Activated naive CD4-positive, alpha-beta T cell treated with anti-CD3 and anti-CD28 coated beads, Interleukin-2, amount 10 ng/mL, durations not matched to agents 7 days and 5 days (primary cell): ENCODE measurements at regions of chr19 and their contacts with region 1.

Region 1: GRCh38 chr19:43765109-43765876 is 10.5 kb upstream of the SMG9 start:
- DNase-seq: peak; percentile 82
- H3K4me3 Mint-ChIP-seq: peak overlapping the region; percentile 37
- H3K27ac Mint-ChIP-seq: peak overlapping the region; percentile 91
- H3K4me1 Mint-ChIP-seq: peaks cover 52% of the 10 kb centered on the region
- H3K27me3 Mint-ChIP-seq: no peaks in the 10 kb centered on the region

Region 2: GRCh38 chr19:43668406-43669158 is 96.7 kb before region 1 on chr19:
- CTCF ChIA-PET with region 1: interaction called, 16 read pairs
- DNase-seq: peak; percentile 99
- H3K4me3 Mint-ChIP-seq: peak overlapping the region; percentile 79
- H3K27ac Mint-ChIP-seq: peak overlapping the region; percentile 71
- H3K4me1 Mint-ChIP-seq: peaks cover 56% of the 10 kb centered on the region
- H3K27me3 Mint-ChIP-seq: peaks cover 37% of the 10 kb centered on the region

Region 3: DNA sequence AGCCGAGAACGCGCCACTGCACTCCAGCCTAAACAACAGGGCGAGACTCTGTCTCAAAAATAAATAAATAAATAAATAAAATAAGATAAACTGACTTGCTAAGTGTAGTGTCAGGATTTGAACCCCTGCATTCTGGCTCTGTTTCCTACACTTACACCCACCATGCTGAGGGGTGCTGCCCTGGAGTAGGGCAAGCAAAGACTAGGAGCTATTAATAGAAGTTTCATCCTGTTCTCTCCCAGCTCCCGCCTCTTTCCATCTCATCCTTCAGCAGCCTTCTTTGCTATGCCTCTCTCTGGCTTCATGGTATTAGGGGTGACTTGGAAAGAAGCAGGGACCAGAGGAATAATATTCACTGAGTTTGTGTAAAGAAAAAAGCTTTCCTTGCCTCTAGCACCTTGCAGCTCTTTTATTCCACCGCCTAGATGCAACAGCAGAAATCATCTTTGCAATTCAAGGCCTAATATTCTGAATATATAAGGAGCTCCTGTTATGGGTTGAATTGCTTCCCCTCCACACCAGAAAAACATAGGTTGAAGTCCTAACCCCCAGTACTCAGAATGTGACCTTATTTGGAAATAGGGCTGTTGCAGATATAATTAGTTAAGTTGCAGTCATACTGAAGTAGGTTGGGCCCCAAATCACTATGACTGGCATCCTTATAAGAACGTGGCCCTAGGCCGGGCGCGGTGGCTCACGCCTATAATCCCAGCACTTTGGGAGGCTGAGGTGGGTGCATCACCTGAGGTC is 86.6 kb before region 1 on chr19:
- CTCF ChIA-PET with region 1: no interaction called
- DNase-seq: no peak
- H3K4me3 Mint-ChIP-seq: no peak overlapping the region
- H3K27ac Mint-ChIP-seq: no peak overlapping the region
- H3K4me1 Mint-ChIP-seq: peaks cover 18% of the 10 kb centered on the region
- H3K27me3 Mint-ChIP-seq: peaks cover 8% of the 10 kb centered on the region

Region 4: DNA sequence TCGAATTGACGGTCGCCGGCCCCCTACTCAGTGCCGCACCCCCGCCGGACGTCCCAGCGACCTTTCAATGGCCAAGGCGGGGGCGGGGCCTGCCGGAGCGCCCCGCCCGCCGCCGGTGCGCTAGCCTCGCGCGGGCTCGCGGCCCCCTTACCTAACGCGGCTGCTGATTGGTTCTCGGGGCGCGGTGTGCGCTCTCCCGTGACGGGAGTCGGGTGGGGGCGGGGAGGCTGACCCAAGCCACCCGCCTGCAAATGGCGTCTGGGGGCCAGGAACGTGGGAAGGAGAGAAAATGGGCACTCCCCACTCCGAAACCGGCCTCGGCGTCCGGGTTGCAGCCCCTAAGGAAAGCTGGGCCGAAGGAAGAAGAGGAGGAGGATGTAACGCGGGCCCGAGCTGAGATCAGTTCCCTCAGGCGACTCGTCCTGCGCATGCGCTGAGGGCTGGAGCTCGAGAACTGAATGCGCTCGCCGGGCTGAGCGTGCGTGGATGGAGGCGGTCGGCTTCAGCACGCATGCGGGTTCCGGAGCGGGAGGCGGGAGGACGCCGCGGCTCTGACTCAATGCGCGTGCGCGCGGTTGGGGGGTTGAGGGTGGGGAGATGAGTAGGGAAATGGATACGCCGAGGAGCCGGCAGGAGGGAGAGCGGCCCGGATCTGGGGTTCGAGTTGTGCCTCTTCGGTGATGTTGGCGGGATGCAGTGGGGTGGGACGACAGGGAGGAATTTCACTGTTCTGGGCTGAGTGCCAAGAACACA is 10.6 kb before region 1 on chr19 and contains the start of gene SMG9:
- CTCF ChIA-PET with region 1: interaction called, 68 read pairs
- DNase-seq: peak; percentile 99
- H3K4me3 Mint-ChIP-seq: peak within 1 kb of the TSS; percentile 92
- H3K27ac Mint-ChIP-seq: peak within 1 kb of the TSS; percentile 99
- H3K4me1 Mint-ChIP-seq: peaks cover 63% of the 10 kb centered on the region
- H3K27me3 Mint-ChIP-seq: peaks cover 3% of the 10 kb centered on the region

Region 5: DNA sequence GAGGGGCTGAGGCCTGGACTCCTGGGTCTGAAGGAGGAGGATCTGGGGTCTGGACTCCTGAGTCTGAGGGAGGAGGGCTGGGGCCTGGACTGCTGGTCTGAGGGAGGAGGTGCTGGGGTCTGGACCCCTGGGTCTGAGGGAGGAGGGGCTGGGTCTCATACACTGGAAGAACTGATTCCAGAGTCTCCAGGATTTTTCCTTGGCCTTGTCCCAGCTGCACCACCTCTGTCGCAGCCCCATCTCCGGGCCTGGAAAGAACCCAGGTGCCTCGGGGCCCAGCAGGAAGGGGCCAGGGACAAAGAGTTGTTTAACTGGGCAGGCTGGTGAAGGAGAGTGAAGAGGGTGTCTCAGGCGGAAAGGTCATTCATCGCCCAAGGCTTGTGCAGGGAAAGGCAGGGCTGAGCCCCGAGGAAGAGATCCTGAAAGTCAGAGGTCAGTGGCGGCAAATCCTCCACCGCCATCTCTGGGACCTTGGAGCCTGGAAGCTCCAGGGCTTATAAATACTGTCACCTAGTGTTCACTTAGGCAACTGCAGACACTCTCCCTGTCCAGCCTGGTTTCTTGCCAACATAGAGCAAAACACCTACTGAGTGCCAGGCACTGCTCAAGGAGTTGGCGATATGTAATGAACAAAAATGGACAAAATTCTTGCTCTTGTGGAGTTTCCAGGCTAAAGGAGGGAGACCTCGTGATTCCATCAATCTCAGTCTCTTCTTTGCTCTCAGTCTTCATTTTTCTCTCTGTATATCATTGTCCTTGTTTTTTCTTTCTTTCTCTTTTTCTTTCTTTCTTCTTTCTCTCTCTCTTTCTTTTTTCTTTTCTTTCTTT is 19.9 kb after region 1 on chr19:
- CTCF ChIA-PET with region 1: interaction called, 162 read pairs
- DNase-seq: peak; percentile 65
- H3K4me3 Mint-ChIP-seq: peak overlapping the region; percentile 2
- H3K27ac Mint-ChIP-seq: peak overlapping the region; percentile 89
- H3K4me1 Mint-ChIP-seq: peaks cover 47% of the 10 kb centered on the region
- H3K27me3 Mint-ChIP-seq: peaks cover 6% of the 10 kb centered on the region